Ovary (tissue), 10 donors: ENCODE measurements at regions of chr2 and their contacts with region 1.

Region 1: DNA sequence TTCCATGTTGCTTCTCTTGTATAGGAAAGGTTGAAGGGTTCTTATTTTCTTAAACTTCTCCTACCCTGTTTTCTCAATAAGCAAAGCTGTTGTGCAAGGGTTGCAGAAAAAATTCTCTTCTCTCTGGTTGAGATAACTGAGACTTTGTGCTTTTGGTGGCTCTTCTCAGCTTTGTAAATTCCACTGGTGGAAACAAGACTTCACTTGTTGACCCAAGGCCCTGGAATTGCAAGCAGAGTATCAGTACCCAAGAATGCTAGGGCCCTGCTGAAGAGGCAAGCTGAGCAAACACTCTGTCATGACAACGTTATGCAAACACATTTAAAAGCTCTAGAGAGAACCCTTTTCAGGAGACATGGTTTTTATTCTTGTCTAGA is 294.7 kb upstream of the EPAS1 start:
- DNase-seq: peak in 1 of 5 donors; percentile 22
- H3K4me3 ChIP-seq: no peak overlapping the region
- H3K27ac ChIP-seq: peak overlapping the region in 1 of 2 donors; percentile 56
- H3K4me1 ChIP-seq: peaks cover 14% of the 10 kb centered on the region
- H3K27me3 ChIP-seq: no peaks in the 10 kb centered on the region
- CTCF ChIP-seq: no peak
- EP300 ChIP-seq: no peak
- POLR2A ChIP-seq: no peak

Region 2: GRCh38 chr2:46621499-46621898 is 619.0 kb after region 1 on chr2:
- intact Hi-C with region 1: loop called in 1 of 4 experiments (anchors 10 kb)
- DNase-seq: no peak
- H3K4me3 ChIP-seq: no peak overlapping the region
- H3K27ac ChIP-seq: no peak overlapping the region
- H3K4me1 ChIP-seq: peaks cover 3% of the 10 kb centered on the region
- H3K27me3 ChIP-seq: no peaks in the 10 kb centered on the region
- CTCF ChIP-seq: no peak
- EP300 ChIP-seq: no peak
- POLR2A ChIP-seq: no peak